CD14-positive monocyte (primary cell): ENCODE measurements at regions of chr14 and their contacts with region 1.

Region 1: DNA sequence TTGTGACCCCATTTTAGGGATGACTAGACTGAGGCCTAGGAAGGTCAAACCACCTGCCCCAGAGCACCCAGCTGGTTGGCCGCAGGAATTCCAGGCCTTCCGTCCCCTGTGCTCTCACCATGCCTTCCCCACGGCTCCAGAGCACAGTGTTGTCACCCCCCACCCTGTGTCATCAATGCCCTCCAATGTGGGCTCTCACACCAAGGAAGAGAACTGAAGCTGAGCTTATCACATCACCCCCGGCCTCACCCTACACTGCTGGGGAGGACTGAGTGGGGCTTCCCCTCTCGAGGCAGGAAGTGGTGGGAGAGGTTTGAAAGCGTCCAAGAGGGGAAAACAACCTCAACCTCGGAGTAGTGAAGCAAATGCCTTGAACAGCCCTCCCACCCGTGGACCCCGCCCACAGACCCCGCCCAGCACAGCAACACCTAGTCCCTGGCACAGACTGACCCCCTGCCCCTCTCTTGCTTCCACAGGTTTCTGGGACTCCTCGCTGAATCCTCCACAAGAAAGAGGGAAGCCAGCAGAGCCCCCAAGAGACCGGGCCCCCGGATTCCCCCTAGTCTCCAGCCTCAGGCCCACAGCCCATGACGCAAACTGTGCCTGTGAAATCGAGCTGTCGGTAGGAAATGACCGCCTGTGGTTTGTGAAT is 97.2 kb downstream of the LGMN start:
- DNase-seq: peak; percentile 91 to 93 (median 92)
- H3K4me3 ChIP-seq: peak overlapping the region in 2 of 3 experiments; percentile 96
- H3K4me3 Mint-ChIP-seq: peak overlapping the region; percentile 100
- H3K27ac ChIP-seq: peak overlapping the region; percentile 98 to 99
- H3K27ac Mint-ChIP-seq: peak overlapping the region; percentile 100
- H3K4me1 ChIP-seq: peaks cover 72 to 82% of the 10 kb centered on the region in 2 donors
- H3K4me1 Mint-ChIP-seq: peaks cover 71% of the 10 kb centered on the region
- H3K27me3 ChIP-seq: no peaks in the 10 kb centered on the region
- H3K27me3 Mint-ChIP-seq: peaks cover 0 to 4% (median 0%) of the 10 kb centered on the region in 3 donors
- CTCF ChIP-seq: no peak

Region 2: GRCh38 chr14:92400579-92401444 is 250.4 kb before region 1 on chr14:
- intact Hi-C with region 1: loop called in 1 of 2 experiments (anchors 5 kb)
- DNase-seq: peak; percentile 75 to 90 (median 86)
- H3K4me3 ChIP-seq: peak overlapping the region in 1 of 3 experiments; percentile 43
- H3K4me3 Mint-ChIP-seq: peak overlapping the region; percentile 32 to 43
- H3K27ac ChIP-seq: peak overlapping the region; percentile 77 to 85
- H3K27ac Mint-ChIP-seq: peak overlapping the region; percentile 92 to 98 (median 94)
- H3K4me1 ChIP-seq: peaks cover 99% of the 10 kb centered on the region in 2 donors
- H3K4me1 Mint-ChIP-seq: peaks cover 95% of the 10 kb centered on the region
- H3K27me3 ChIP-seq: no peaks in the 10 kb centered on the region
- H3K27me3 Mint-ChIP-seq: peaks cover 0 to 1% (median 0%) of the 10 kb centered on the region in 3 donors
- CTCF ChIP-seq: no peak

Region 3: GRCh38 chr14:92456215-92457015 is 194.8 kb before region 1 on chr14:
- intact Hi-C with region 1: loop called in 1 of 2 experiments (anchors 5 kb)
- DNase-seq: peak; percentile 79 to 85 (median 83)
- H3K4me3 ChIP-seq: no peak overlapping the region
- H3K4me3 Mint-ChIP-seq: peak overlapping the region in 1 of 2 donors; percentile 47
- H3K27ac ChIP-seq: peak overlapping the region in 1 of 2 donors; percentile 52
- H3K27ac Mint-ChIP-seq: peak overlapping the region in 6 of 7 donors; percentile 75 to 91 (median 83)
- H3K4me1 ChIP-seq: peaks cover 40 to 52% of the 10 kb centered on the region in 2 donors
- H3K4me1 Mint-ChIP-seq: peaks cover 54% of the 10 kb centered on the region
- H3K27me3 ChIP-seq: no peaks in the 10 kb centered on the region
- H3K27me3 Mint-ChIP-seq: peaks cover 0 to 2% (median 0%) of the 10 kb centered on the region in 3 donors
- CTCF ChIP-seq: peak; percentile 87

Region 4: DNA sequence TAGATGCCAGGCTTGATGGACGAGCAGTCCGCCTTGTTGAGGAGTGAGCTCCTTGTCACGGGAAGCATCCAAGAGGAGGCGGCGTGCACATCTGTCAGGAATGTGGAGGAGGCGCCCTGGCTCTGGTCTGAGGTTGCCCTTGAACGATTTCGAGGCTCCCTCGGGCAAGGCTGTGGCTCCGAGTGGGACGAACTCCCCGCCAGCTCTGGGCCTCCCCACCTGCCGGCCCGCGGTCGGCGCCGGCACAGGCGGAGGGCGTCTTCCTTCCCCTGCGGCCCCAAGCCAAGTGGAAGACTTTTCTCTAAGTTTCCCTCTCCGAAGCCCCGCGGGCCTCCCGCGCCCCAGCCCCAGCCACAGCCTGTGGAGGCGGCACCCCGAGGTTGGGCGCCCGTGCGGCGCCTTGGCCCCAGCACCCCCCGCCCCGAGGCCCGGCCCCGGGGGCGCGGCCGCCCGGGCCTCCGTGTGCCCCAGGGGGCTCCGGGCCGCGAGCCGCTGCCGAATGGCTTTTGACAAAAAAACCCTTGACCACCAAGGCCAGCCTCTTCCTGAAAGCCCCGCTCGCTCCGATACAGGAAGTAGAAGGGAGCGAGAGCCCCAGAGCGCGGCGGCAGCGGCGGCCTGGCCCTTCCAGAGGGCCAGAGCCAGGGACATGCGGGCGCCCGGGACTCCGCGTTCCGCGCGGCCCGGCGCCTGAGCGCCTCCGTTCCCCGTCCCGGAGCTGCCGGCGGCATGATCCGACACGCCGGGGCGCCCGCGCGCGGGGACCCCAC is 137.8 kb before region 1 on chr14 and contains the start of gene RIN3:
- intact Hi-C with region 1: loop called in 1 of 2 experiments (anchors 10 kb)
- DNase-seq: peak; percentile 70 to 82 (median 77)
- H3K4me3 ChIP-seq: peak within 1 kb of the TSS; percentile 65 to 92 (median 91)
- H3K4me3 Mint-ChIP-seq: peak within 1 kb of the TSS; percentile 86 to 89
- H3K27ac ChIP-seq: peak within 1 kb of the TSS; percentile 55 to 95
- H3K27ac Mint-ChIP-seq: peak within 1 kb of the TSS; percentile 57 to 92 (median 90)
- H3K4me1 ChIP-seq: peaks cover 39 to 70% of the 10 kb centered on the region in 2 donors
- H3K4me1 Mint-ChIP-seq: peaks cover 64% of the 10 kb centered on the region
- H3K27me3 ChIP-seq: peaks cover 0 to 12% of the 10 kb centered on the region in 2 donors
- H3K27me3 Mint-ChIP-seq: peaks cover 12 to 31% (median 30%) of the 10 kb centered on the region in 3 donors
- CTCF ChIP-seq: no peak
- polyA plus RNA-seq, gene RIN3: 42.8 to 144 (median 54.6) TPM

Region 5: GRCh38 chr14:92585981-92586937 is 65.0 kb before region 1 on chr14:
- intact Hi-C with region 1: loop called (anchors 2 to 10 kb)
- DNase-seq: peak; percentile 63 to 87 (median 83)
- H3K4me3 ChIP-seq: no peak overlapping the region
- H3K4me3 Mint-ChIP-seq: no peak overlapping the region
- H3K27ac ChIP-seq: peak overlapping the region; percentile 4 to 66
- H3K27ac Mint-ChIP-seq: peak overlapping the region; percentile 76 to 93 (median 91)
- H3K4me1 ChIP-seq: peaks cover 32 to 39% of the 10 kb centered on the region in 2 donors
- H3K4me1 Mint-ChIP-seq: peaks cover 63% of the 10 kb centered on the region
- H3K27me3 ChIP-seq: no peaks in the 10 kb centered on the region
- H3K27me3 Mint-ChIP-seq: peaks cover 0 to 2% (median 0%) of the 10 kb centered on the region in 3 donors
- CTCF ChIP-seq: no peak

Region 6: DNA sequence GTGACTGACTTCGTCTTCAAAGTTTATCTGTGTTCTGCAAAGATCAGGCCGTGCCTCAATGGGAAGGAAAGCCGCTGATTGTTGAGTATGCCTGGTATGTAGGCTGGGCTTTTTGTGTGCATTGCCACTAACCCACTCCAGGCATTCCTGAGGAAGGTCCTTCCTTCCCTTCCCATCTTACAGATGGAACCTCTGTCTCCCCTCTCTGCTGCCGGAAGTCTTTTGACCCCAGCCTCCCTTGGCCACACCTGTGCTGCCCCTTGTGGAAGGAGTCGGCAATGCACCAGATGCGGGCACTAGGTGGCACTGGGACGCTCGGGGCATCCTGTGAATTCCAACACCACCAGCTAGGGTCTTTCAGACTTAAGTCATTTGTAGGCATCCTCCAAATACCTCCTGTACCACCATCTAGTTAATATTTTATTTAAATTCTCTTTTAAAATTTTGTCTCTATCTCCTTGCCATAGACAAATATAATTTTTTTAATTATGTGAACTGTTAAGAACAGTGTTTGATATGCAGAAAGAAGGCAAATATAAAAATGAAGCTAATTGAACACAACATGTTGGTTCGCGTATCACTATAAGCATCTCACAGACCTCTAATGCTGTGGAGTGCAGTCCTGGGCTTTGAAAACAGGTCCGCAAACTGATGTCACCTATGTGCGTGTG is 38.1 kb before region 1 on chr14:
- intact Hi-C with region 1: loop called (anchors 5 kb)
- DNase-seq: peak; percentile 40 to 60 (median 58)
- H3K4me3 ChIP-seq: no peak overlapping the region
- H3K4me3 Mint-ChIP-seq: no peak overlapping the region
- H3K27ac ChIP-seq: peak overlapping the region in 1 of 2 donors; percentile 4
- H3K27ac Mint-ChIP-seq: peak overlapping the region in 3 of 7 donors; percentile 36 to 83 (median 66)
- H3K4me1 ChIP-seq: peaks cover 30 to 38% of the 10 kb centered on the region in 2 donors
- H3K4me1 Mint-ChIP-seq: peaks cover 59% of the 10 kb centered on the region
- H3K27me3 ChIP-seq: no peaks in the 10 kb centered on the region
- H3K27me3 Mint-ChIP-seq: peaks cover 0 to 8% (median 0%) of the 10 kb centered on the region in 3 donors
- CTCF ChIP-seq: peak; percentile 95